Activated CD8-positive, alpha-beta T cell treated with anti-CD3 and anti-CD28 coated beads, Interleukin-2, amount 10 ng/mL, durations not matched to agents 7 days and 5 days (primary cell): ENCODE measurements at regions of chr3 and their contacts with region 1.

Region 1: GRCh38 chr3:156509189-156510174 is 45.4 kb downstream of the SSR3 start:
- DNase-seq: no peak
- ATAC-seq: peak; percentile 81
- H3K4me3 Mint-ChIP-seq: no peak overlapping the region
- H3K27ac Mint-ChIP-seq: no peak overlapping the region
- H3K4me1 Mint-ChIP-seq: peaks cover 8% of the 10 kb centered on the region
- H3K27me3 Mint-ChIP-seq: peaks cover 27% of the 10 kb centered on the region

Region 2: DNA sequence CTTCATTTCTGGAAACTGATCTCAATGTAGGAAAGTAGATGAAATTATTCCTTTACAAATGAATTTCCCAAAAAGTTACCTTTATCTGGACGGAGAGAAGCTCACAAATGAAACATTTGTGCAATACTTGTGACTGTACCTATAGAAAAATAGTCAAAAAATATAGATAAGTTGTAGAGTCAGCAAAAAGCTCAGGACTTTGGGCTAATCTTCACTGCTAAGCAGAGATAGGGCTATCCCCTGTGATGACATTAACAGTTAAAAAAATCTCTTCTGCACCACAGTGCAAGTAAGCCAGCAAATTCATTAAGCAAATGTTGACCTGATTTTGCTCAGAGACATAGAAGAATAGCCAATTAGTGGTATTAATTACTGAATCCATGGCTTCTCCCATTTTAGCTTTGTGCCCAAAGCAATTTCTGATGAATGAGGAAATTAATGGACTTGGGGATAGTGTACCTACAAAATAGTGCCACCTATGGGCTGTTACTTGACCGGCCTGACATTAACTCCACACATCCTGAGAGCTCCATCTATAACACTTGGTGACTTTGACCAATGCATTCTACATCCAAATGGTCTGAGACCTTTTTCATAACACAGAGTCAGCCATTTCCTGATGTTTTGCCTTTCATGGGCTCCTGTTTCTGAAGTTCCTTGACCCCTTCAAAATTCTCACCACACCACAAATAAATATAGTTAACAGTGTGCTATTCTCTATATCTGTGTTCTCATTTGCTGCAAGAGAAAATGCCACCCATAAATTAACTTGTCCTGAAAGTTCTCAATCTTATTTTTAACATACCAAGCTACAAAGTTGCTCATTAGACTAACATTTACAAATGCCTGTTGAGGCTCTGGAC is 59.5 kb before region 1 on chr3:
- CTCF ChIA-PET with region 1: interaction called, 76 read pairs
- POLR2A ChIA-PET with region 1: no interaction called
- DNase-seq: no peak
- ATAC-seq: peak; percentile 67
- H3K4me3 Mint-ChIP-seq: no peak overlapping the region
- H3K27ac Mint-ChIP-seq: no peak overlapping the region
- H3K4me1 Mint-ChIP-seq: peaks cover 2% of the 10 kb centered on the region
- H3K27me3 Mint-ChIP-seq: peaks cover 26% of the 10 kb centered on the region

Region 3: DNA sequence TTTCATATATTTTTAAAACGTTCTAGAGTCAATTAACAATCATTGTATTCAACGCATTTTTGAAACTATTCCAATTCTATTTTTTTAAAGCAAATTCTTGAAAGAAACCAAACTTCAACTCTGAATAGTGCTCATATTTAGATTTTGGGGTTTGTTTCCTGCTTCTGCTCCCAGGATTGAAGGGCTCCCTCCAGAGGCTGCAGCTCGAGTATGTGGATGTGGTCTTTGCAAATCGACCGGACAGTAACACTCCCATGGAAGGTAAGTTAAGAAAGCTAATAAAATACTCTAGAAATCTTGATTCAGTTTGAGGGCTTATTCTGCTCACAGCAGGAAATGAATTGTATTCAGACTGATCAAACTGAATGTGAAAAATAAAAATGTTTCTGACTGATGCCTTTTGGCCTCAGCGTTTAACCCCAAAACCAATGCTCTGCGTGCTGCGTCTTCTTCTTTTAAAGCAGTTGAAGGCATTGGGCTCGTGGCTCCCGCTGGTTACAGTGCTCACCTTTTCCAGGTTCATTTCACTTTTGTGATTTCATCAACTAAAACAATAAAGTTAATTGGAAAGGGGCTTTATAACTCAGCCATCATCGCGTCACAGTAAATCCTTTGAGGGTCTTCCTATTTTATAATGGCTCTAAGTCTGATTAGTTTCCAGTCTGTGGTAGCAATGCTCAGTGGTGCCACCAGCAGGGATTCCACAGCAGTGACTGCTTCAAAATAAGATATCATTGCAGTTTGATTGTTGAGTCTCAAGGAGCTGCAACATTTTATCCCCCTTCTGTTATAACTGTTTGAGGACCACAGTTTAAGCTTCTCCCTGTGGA is 34.7 kb before region 1 on chr3:
- CTCF ChIA-PET with region 1: interaction called, 99 read pairs
- POLR2A ChIA-PET with region 1: no interaction called
- DNase-seq: peak; percentile 29
- ATAC-seq: no peak
- H3K4me3 Mint-ChIP-seq: no peak overlapping the region
- H3K27ac Mint-ChIP-seq: no peak overlapping the region
- H3K4me1 Mint-ChIP-seq: peaks cover 3% of the 10 kb centered on the region
- H3K27me3 Mint-ChIP-seq: peaks cover 32% of the 10 kb centered on the region

Region 4: DNA sequence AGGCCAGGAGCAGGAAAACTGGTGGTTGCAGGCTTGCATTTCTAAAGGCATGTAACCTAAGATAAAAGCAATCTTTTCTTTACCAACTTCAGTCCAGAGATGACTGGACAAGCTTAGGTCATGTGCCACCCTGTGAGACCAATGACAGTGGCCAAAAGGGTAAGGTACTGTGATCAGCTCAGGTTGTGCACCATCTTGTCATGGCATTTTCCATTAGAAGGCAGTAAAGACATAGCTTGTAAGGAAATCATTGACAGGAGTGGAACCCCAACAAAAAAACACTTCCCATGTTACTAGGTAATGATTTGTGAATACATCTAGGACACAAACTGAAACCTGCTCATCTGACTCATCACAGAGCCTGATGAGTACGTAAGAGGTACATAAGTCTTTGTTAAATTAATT is 10.3 kb after region 1 on chr3:
- CTCF ChIA-PET with region 1: interaction called, 19 read pairs
- POLR2A ChIA-PET with region 1: interaction called, 3 read pairs
- DNase-seq: no peak
- ATAC-seq: peak; percentile 42
- H3K4me3 Mint-ChIP-seq: no peak overlapping the region
- H3K27ac Mint-ChIP-seq: no peak overlapping the region
- H3K4me1 Mint-ChIP-seq: peaks cover 16% of the 10 kb centered on the region
- H3K27me3 Mint-ChIP-seq: peaks cover 35% of the 10 kb centered on the region

Region 5: GRCh38 chr3:156542715-156543555 is 33.5 kb after region 1 on chr3:
- CTCF ChIA-PET with region 1: interaction called, 11 read pairs
- POLR2A ChIA-PET with region 1: no interaction called
- DNase-seq: no peak
- ATAC-seq: no peak
- H3K4me3 Mint-ChIP-seq: no peak overlapping the region
- H3K27ac Mint-ChIP-seq: peak overlapping the region; percentile 3
- H3K4me1 Mint-ChIP-seq: peaks cover 21% of the 10 kb centered on the region
- H3K27me3 Mint-ChIP-seq: no peaks in the 10 kb centered on the region

Region 6: GRCh38 chr3:156602424-156602823 is 92.9 kb after region 1 on chr3:
- CTCF ChIA-PET with region 1: no interaction called
- POLR2A ChIA-PET with region 1: no interaction called
- DNase-seq: no peak
- ATAC-seq: peak; percentile 74
- H3K4me3 Mint-ChIP-seq: no peak overlapping the region
- H3K27ac Mint-ChIP-seq: peak overlapping the region; percentile 35
- H3K4me1 Mint-ChIP-seq: peaks cover 22% of the 10 kb centered on the region
- H3K27me3 Mint-ChIP-seq: peaks cover 11% of the 10 kb centered on the region